HEK293 (cell line): ENCODE measurements at regions of chr14 and their contacts with region 1.

Region 1: GRCh38 chr14:30980980-30981379 is 44.5 kb upstream of the AP4S1 start:
- H3K4me3 ChIP-seq: no peak overlapping the region
- H3K27ac ChIP-seq: no peak overlapping the region
- H3K4me1 ChIP-seq: no peaks in the 10 kb centered on the region; the same call in 1 of the 2 replicates
- CTCF ChIP-seq: no peak

Region 2: DNA sequence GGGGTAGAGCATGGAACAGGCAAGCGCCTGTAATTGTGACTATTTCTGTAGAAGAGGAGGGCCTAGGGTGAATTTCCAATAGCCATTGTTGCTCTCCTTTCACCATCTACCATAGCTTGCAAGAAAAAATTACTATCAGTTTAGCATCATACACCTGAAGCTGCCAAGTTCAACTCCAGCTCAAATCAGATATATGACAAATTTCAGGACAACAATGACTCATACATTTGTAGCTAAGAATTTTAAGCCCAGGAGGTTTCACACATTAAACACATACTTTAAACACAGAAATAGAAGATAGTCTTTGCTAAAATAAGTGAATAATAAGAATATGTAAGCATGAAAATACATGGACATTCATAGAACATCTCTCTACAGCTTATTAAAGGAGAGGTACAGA is 439.7 kb before region 1 on chr14:
- CTCF ChIA-PET with region 1: no interaction called
- POLR2A ChIA-PET with region 1: no interaction called
- H3K4me3 ChIP-seq: no peak overlapping the region
- H3K27ac ChIP-seq: no peak overlapping the region
- H3K4me1 ChIP-seq: no peaks in the 10 kb centered on the region
- CTCF ChIP-seq: no peak

Region 3: GRCh38 chr14:31084385-31084784 is 103.4 kb after region 1 on chr14:
- CTCF ChIA-PET with region 1: interaction called, 10 read pairs
- POLR2A ChIA-PET with region 1: no interaction called
- H3K4me3 ChIP-seq: no peak overlapping the region
- H3K27ac ChIP-seq: no peak overlapping the region
- H3K4me1 ChIP-seq: peaks cover 10% of the 10 kb centered on the region; the same call in 1 of the 2 replicates
- CTCF ChIP-seq: no peak